Heart left ventricle (tissue), 16 donors: ENCODE measurements at regions of chr15 and their contacts with region 1.

Region 1: GRCh38 chr15:20367093-20367492 is 174.5 kb downstream of the GOLGA6L6 start:
- DNase-seq: no peak
- ATAC-seq: no peak
- H3K4me3 ChIP-seq: no peak overlapping the region
- H3K27ac ChIP-seq: no peak overlapping the region
- H3K4me1 ChIP-seq: no peaks in the 10 kb centered on the region
- H3K27me3 ChIP-seq: peaks cover 0 to 8% (median 0%) of the 10 kb centered on the region in 9 donors
- CTCF ChIP-seq: no peak
- POLR2A ChIP-seq: no peak

Region 2: DNA sequence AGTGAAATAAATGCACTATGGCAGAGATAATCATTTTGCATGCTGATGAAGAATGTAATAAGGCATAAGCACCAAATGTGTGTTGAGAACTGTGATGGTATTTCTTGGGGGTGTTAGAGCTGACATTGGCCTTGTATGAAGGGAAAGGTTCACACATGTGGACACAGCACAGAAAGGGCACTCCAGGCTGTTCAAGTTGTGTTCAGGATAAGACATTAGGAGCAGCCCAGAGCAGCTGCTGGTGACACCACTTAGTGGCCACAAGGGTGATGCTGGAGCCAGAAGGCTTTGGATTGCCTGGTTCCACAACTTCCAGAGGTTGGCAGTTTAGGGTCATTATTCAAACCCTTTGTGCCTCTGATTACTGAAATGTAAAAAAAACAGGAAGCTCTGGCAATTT is 19.1 kb after region 1 on chr15:
- intact Hi-C with region 1: loop called in 4 of 10 experiments (anchors 2 kb)
- DNase-seq: peak in 1 of 5 donors; percentile 32
- ATAC-seq: peak in 1 of 4 donors; percentile 33
- H3K4me3 ChIP-seq: no peak overlapping the region
- H3K27ac ChIP-seq: no peak overlapping the region
- H3K4me1 ChIP-seq: no peaks in the 10 kb centered on the region
- H3K27me3 ChIP-seq: no peaks in the 10 kb centered on the region
- CTCF ChIP-seq: no peak
- POLR2A ChIP-seq: no peak